Activated naive CD4-positive, alpha-beta T cell treated with anti-CD3 and anti-CD28 coated beads for 36 hours (primary cell): ENCODE measurements at regions of chr2 and their contacts with region 1.

Region 1: GRCh38 chr2:157628477-157629415 is at the start of gene ACVR1C:
- DNase-seq: peak; percentile 83
- H3K4me3 Mint-ChIP-seq: peak within 1 kb of the TSS; percentile 94
- H3K27ac Mint-ChIP-seq: no peak within 1 kb of the TSS
- H3K4me1 Mint-ChIP-seq: peaks cover 37% of the 10 kb centered on the region
- H3K27me3 Mint-ChIP-seq: peaks cover 2% of the 10 kb centered on the region
- total RNA-seq, gene ACVR1C: 3.5 to 3.6 TPM

Region 2: GRCh38 chr2:157492189-157492773 is 136.5 kb before region 1 on chr2:
- CTCF ChIA-PET with region 1: interaction called, 18 read pairs
- intact Hi-C with region 1: loop called (anchors 1 kb)
- DNase-seq: peak; percentile 89
- H3K4me3 Mint-ChIP-seq: no peak overlapping the region
- H3K27ac Mint-ChIP-seq: no peak overlapping the region
- H3K4me1 Mint-ChIP-seq: peaks cover 62% of the 10 kb centered on the region
- H3K27me3 Mint-ChIP-seq: no peaks in the 10 kb centered on the region

Region 3: GRCh38 chr2:157559061-157559460 is 69.7 kb before region 1 on chr2:
- CTCF ChIA-PET with region 1: no interaction called
- intact Hi-C with region 1: no loop called
- DNase-seq: no peak
- H3K4me3 Mint-ChIP-seq: no peak overlapping the region
- H3K27ac Mint-ChIP-seq: no peak overlapping the region
- H3K4me1 Mint-ChIP-seq: peaks cover 31% of the 10 kb centered on the region
- H3K27me3 Mint-ChIP-seq: no peaks in the 10 kb centered on the region

Region 4: GRCh38 chr2:157596992-157597681 is 31.6 kb before region 1 on chr2:
- CTCF ChIA-PET with region 1: interaction called, 15 read pairs
- intact Hi-C with region 1: no loop called
- DNase-seq: peak; percentile 78
- H3K4me3 Mint-ChIP-seq: peak overlapping the region; percentile 71
- H3K27ac Mint-ChIP-seq: no peak overlapping the region
- H3K4me1 Mint-ChIP-seq: peaks cover 18% of the 10 kb centered on the region
- H3K27me3 Mint-ChIP-seq: no peaks in the 10 kb centered on the region

Region 5: GRCh38 chr2:157866202-157866601 is 237.5 kb after region 1 on chr2:
- CTCF ChIA-PET with region 1: no interaction called
- intact Hi-C with region 1: loop called (anchors 5 kb)
- DNase-seq: no peak
- H3K4me3 Mint-ChIP-seq: no peak overlapping the region
- H3K27ac Mint-ChIP-seq: no peak overlapping the region
- H3K4me1 Mint-ChIP-seq: peaks cover 57% of the 10 kb centered on the region
- H3K27me3 Mint-ChIP-seq: no peaks in the 10 kb centered on the region